MCF 10A (cell line): ENCODE measurements at regions of chr3 and their contacts with region 1.

Region 1: DNA sequence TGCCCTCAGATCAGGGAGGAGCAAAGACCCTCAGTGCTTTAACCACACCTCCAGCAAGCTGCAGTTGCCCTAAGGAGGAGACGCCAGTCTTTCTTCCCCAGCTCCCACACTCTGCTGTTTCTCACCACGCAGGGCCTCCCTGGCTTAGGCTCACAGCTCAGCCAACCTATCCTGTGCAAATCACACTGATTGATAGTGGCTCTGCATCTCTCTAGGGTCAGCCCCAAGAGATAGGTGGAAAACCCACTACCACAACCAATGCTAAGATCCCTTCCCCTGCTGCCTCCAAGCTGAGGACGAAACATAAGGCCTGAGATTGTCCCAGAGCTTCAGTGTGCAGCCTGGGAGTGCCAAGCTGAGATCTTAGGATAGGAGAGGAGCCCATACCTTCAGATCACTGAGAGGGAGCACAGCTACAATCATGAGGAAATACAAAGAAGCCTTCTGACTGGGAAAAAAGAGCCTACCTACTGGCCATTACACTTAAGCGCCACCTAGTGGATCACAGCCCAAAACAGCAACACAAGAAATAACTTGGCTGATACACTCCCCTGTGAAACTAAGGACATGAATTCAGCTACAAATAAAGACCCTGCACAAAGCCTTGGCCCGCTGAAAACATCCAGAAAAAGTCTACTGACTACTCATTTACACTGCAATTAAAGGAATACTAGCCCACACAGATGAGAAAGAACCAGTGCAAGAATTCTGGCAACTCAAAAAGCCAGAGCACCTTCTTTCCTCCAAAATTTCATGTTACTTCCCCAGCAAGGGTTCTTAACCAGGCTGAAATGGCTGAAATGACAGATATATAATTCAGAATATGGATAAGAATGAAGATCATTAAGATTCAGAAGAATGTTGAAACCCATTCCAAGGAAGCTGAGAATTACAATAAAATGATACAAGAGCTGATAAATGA is 271.5 kb upstream of the DCBLD2 start:
- DNase-seq: peak; percentile 80
- H3K4me3 Mint-ChIP-seq: no peak overlapping the region
- H3K27ac Mint-ChIP-seq: no peak overlapping the region
- H3K4me1 Mint-ChIP-seq: no peaks in the 10 kb centered on the region
- H3K27me3 Mint-ChIP-seq: no peaks in the 10 kb centered on the region
- CTCF ChIP-seq: peak; percentile 46

Region 2: DNA sequence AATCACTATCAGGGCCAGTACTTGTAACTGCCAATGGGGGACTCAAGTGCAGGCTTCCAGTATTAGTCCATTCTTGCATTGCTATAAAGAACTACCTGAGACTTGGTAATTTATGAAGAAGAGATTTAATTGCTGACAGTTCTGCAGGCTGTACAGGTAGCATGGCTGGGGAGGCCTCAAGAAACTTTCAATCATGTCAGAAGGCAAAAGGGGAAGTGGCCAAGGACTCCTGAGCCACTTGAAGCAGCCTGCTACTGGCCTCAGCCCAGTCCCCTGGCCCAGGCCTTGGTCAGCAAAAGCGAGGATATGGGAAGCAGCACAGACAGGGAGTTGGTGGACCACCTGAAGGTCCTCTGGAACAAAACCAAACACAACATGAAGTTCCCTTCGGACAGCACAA is 739.2 kb before region 1 on chr3:
- CTCF ChIA-PET with region 1: no interaction called
- POLR2A ChIA-PET with region 1: no interaction called
- intact Hi-C with region 1: no loop called
- DNase-seq: no peak
- H3K4me3 Mint-ChIP-seq: no peak overlapping the region
- H3K27ac Mint-ChIP-seq: no peak overlapping the region
- H3K4me1 Mint-ChIP-seq: no peaks in the 10 kb centered on the region
- H3K27me3 Mint-ChIP-seq: no peaks in the 10 kb centered on the region
- CTCF ChIP-seq: no peak

Region 3: GRCh38 chr3:98741121-98741716 is 431.8 kb before region 1 on chr3:
- CTCF ChIA-PET with region 1: no interaction called
- POLR2A ChIA-PET with region 1: no interaction called
- intact Hi-C with region 1: no loop called
- DNase-seq: peak; percentile 21
- H3K4me3 Mint-ChIP-seq: no peak overlapping the region
- H3K27ac Mint-ChIP-seq: peak overlapping the region; percentile 32
- H3K4me1 Mint-ChIP-seq: peaks cover 35% of the 10 kb centered on the region
- H3K27me3 Mint-ChIP-seq: no peaks in the 10 kb centered on the region
- CTCF ChIP-seq: no peak

Region 4: GRCh38 chr3:99023590-99024192 is 149.3 kb before region 1 on chr3:
- CTCF ChIA-PET with region 1: interaction called, 138 read pairs
- POLR2A ChIA-PET with region 1: interaction called, 4 read pairs
- intact Hi-C with region 1: loop called (anchors 1 kb)
- DNase-seq: peak; percentile 55
- H3K4me3 Mint-ChIP-seq: no peak overlapping the region
- H3K27ac Mint-ChIP-seq: no peak overlapping the region
- H3K4me1 Mint-ChIP-seq: no peaks in the 10 kb centered on the region
- H3K27me3 Mint-ChIP-seq: no peaks in the 10 kb centered on the region
- CTCF ChIP-seq: peak; percentile 62

Region 5: GRCh38 chr3:99186016-99186415 is 13.0 kb after region 1 on chr3:
- CTCF ChIA-PET with region 1: interaction called, 24 read pairs
- POLR2A ChIA-PET with region 1: interaction called, 5 read pairs
- intact Hi-C with region 1: no loop called
- DNase-seq: no peak
- H3K4me3 Mint-ChIP-seq: no peak overlapping the region
- H3K27ac Mint-ChIP-seq: no peak overlapping the region
- H3K4me1 Mint-ChIP-seq: no peaks in the 10 kb centered on the region
- H3K27me3 Mint-ChIP-seq: no peaks in the 10 kb centered on the region
- CTCF ChIP-seq: no peak

Region 6: DNA sequence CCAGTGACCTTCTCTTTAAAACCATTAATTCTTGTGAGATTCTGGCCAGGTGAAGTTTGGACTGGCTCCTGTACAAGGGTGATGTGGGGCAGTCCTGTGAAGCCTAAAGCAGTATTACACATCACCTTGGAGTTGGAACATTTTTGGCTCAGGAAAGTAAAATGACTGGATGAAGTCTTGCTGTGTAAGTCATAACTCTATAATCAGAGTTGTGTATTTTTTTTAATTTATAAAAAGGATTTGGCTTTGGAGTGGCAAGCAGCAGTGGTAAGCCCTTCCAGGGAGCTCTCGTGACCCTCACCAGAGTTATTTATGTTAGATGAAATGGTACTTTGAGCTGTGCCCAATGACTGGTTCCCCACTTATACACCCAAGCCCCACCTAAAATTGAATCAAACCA is 59.7 kb after region 1 on chr3:
- CTCF ChIA-PET with region 1: no interaction called
- POLR2A ChIA-PET with region 1: no interaction called
- intact Hi-C with region 1: no loop called
- DNase-seq: no peak
- H3K4me3 Mint-ChIP-seq: no peak overlapping the region
- H3K27ac Mint-ChIP-seq: no peak overlapping the region
- H3K4me1 Mint-ChIP-seq: peaks cover 6% of the 10 kb centered on the region
- H3K27me3 Mint-ChIP-seq: no peaks in the 10 kb centered on the region
- CTCF ChIP-seq: no peak

Region 7: GRCh38 chr3:99319961-99320360 is 147.0 kb after region 1 on chr3:
- CTCF ChIA-PET with region 1: interaction called, 3 read pairs
- POLR2A ChIA-PET with region 1: no interaction called
- intact Hi-C with region 1: loop called (anchors 10 kb)
- DNase-seq: peak; percentile 37
- H3K4me3 Mint-ChIP-seq: no peak overlapping the region
- H3K27ac Mint-ChIP-seq: peak overlapping the region; percentile 69
- H3K4me1 Mint-ChIP-seq: peaks cover 40% of the 10 kb centered on the region
- H3K27me3 Mint-ChIP-seq: no peaks in the 10 kb centered on the region
- CTCF ChIP-seq: no peak

Region 8: GRCh38 chr3:99686955-99687612 is 514.1 kb after region 1 on chr3:
- CTCF ChIA-PET with region 1: interaction called, 10 read pairs
- POLR2A ChIA-PET with region 1: no interaction called
- intact Hi-C with region 1: loop called (anchors 5 kb)
- DNase-seq: peak; percentile 76
- H3K4me3 Mint-ChIP-seq: no peak overlapping the region
- H3K27ac Mint-ChIP-seq: peak overlapping the region; percentile 71
- H3K4me1 Mint-ChIP-seq: peaks cover 15% of the 10 kb centered on the region
- H3K27me3 Mint-ChIP-seq: no peaks in the 10 kb centered on the region
- CTCF ChIP-seq: peak; percentile 69

Region 9: DNA sequence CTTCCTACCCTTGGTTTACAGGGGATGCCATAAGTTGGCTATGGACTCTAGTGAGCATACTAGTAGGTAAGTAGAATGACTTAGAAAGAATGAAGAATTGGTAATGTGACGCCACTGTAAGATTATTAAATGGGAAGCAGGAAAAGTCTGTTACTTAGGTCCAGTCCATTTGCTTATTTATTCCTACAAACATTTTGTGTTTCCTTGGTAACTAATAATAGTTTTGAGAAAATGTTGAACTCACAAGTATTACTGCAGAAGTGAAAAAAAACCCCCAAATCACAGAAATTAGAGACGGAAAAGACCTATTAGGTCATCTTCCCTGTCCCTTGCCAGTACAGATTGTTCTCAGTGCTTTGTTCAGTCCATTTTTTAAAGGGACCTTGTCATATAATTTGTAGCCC is 708.1 kb after region 1 on chr3:
- CTCF ChIA-PET with region 1: no interaction called
- POLR2A ChIA-PET with region 1: no interaction called
- intact Hi-C with region 1: no loop called
- DNase-seq: no peak
- H3K4me3 Mint-ChIP-seq: no peak overlapping the region
- H3K27ac Mint-ChIP-seq: peak overlapping the region; percentile 46
- H3K4me1 Mint-ChIP-seq: peaks cover 15% of the 10 kb centered on the region
- H3K27me3 Mint-ChIP-seq: no peaks in the 10 kb centered on the region
- CTCF ChIP-seq: no peak